Posterior cingulate gyrus (tissue), 11 donors: ENCODE measurements at regions of chrX and their contacts with region 1.

Region 1: GRCh38 chrX:28586981-28587551 is at the start of gene IL1RAPL1:
- DNase-seq: peak in 4 of 10 donors; percentile 15 to 36 (median 20)

Region 2: GRCh38 chrX:28719620-28720019 is 132.6 kb after region 1 on chrX:
- intact Hi-C with region 1: no loop called
- DNase-seq: no peak

Region 3: GRCh38 chrX:28802625-28803024 is 215.6 kb after region 1 on chrX:
- intact Hi-C with region 1: loop called (anchors 10 kb)
- DNase-seq: no peak

Region 4: DNA sequence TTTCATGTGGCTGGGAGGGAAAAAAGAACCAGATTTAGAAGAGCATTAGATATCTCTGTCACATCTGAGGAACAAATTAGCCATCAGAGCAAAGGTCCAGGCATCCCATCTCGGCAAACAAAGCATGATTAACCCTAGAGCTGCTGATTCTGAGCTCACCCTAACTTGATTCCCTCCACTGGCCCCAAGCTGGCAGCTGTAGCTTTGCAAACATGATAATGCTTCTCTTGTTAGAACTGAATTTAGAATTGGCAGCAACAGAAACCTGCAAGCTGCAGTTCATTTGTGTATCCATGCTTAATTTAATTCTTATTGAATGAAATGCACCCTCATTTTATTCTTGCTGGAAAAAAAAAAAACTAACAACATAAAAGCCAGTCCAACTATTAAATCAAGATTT is 289.3 kb after region 1 on chrX:
- intact Hi-C with region 1: no loop called
- DNase-seq: no peak

Region 5: DNA sequence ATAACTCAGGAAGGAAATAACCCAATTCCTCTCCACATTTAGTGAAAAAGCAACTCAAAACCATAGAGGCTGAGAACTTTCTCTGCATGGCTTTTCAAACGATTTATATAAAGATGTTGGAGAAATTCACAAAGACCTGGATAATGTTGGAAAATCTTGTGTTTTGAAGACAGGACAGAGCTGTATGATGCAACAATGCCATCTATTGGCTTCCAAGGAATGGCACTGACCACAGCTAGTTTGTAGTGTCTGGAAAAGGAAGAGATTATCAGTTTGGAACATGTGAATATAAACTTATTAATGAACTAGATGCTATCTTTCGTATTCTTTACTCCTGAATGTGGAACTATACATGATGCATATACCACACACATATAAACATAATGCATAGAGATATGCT is 503.7 kb after region 1 on chrX:
- intact Hi-C with region 1: loop called (anchors 5 kb)
- DNase-seq: peak in 1 of 10 donors; percentile 12